ENCODE measurements at regions of chr16 and their contacts with region 1.

Region 1: GRCh38 chr16:70523076-70523742 is at the start of gene COG4:
- DNase-seq: peak; percentile 96
- H3K4me3 Mint-ChIP-seq: peak within 1 kb of the TSS; percentile 94
- H3K27ac Mint-ChIP-seq: peak within 1 kb of the TSS; percentile 99
- H3K4me1 Mint-ChIP-seq: peaks cover 46% of the 10 kb centered on the region
- H3K27me3 Mint-ChIP-seq: no peaks in the 10 kb centered on the region
- total RNA-seq, gene COG4: 42.0 to 48.7 TPM

Region 2: GRCh38 chr16:70251629-70252354 is 271.4 kb before region 1 on chr16 and contains the start of gene EXOSC6:
- CTCF ChIA-PET with region 1: interaction called, 3 read pairs
- intact Hi-C with region 1: loop called (anchors 10 kb)
- DNase-seq: peak; percentile 96
- H3K4me3 Mint-ChIP-seq: peak within 1 kb of the TSS; percentile 86
- H3K27ac Mint-ChIP-seq: peak within 1 kb of the TSS; percentile 93
- H3K4me1 Mint-ChIP-seq: peaks cover 24% of the 10 kb centered on the region
- H3K27me3 Mint-ChIP-seq: no peaks in the 10 kb centered on the region
- total RNA-seq, gene EXOSC6: 20.3 to 21.0 TPM

Region 3: GRCh38 chr16:70342016-70342415 is 181.2 kb before region 1 on chr16:
- CTCF ChIA-PET with region 1: no interaction called
- intact Hi-C with region 1: loop called (anchors 1 kb)
- DNase-seq: no peak
- H3K4me3 Mint-ChIP-seq: no peak overlapping the region
- H3K27ac Mint-ChIP-seq: no peak overlapping the region
- H3K4me1 Mint-ChIP-seq: peaks cover 8% of the 10 kb centered on the region
- H3K27me3 Mint-ChIP-seq: no peaks in the 10 kb centered on the region

Region 4: DNA sequence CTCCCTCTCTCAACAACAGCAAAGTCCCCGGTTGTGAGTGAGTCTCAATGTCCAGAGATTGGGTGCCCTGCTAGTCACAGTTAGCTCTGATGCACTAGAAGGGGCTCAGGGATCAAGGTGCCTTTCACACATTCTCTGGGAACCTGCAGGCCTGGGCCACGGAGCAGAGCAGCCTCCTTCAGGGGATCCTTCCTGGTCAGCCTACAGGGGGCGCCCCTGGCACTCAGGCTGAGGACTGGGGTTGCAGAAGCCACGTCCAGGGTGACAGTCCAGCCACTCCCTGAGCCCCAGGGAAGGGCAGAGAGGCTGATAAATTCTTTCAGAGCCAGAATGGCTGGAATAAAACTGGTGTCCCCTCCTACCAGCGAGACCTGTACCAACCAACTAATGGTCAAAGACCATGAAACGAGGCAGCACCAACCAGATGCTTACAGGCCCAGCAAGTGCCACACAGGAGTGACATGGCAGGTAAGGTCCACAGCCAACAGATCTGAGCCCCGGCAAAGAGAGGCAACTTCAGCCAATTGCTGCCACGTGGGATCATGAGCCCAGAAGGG is 127.8 kb before region 1 on chr16:
- CTCF ChIA-PET with region 1: interaction called, 3 read pairs
- intact Hi-C with region 1: loop called (anchors 2 kb)
- DNase-seq: peak; percentile 80
- H3K4me3 Mint-ChIP-seq: no peak overlapping the region
- H3K27ac Mint-ChIP-seq: no peak overlapping the region
- H3K4me1 Mint-ChIP-seq: peaks cover 3% of the 10 kb centered on the region
- H3K27me3 Mint-ChIP-seq: no peaks in the 10 kb centered on the region

Region 5: GRCh38 chr16:70438969-70439862 is 84.0 kb before region 1 on chr16 and contains the start of gene ST3GAL2:
- CTCF ChIA-PET with region 1: no interaction called
- intact Hi-C with region 1: loop called (anchors 1 kb)
- DNase-seq: peak; percentile 96
- H3K4me3 Mint-ChIP-seq: peak within 1 kb of the TSS; percentile 91
- H3K27ac Mint-ChIP-seq: peak within 1 kb of the TSS; percentile 61
- H3K4me1 Mint-ChIP-seq: peaks cover 27% of the 10 kb centered on the region
- H3K27me3 Mint-ChIP-seq: no peaks in the 10 kb centered on the region
- total RNA-seq, gene ST3GAL2: 9.3 to 9.9 TPM

Region 6: GRCh38 chr16:70470927-70471341 is 52.3 kb before region 1 on chr16:
- CTCF ChIA-PET with region 1: interaction called, 4 read pairs
- intact Hi-C with region 1: loop called (anchors 1 kb)
- DNase-seq: no peak
- H3K4me3 Mint-ChIP-seq: no peak overlapping the region
- H3K27ac Mint-ChIP-seq: no peak overlapping the region
- H3K4me1 Mint-ChIP-seq: no peaks in the 10 kb centered on the region
- H3K27me3 Mint-ChIP-seq: no peaks in the 10 kb centered on the region

Measured in activated naive CD4-positive, alpha-beta T cell treated with anti-CD3 and anti-CD28 coated beads for 36 hours (primary cell).